Prostate gland (tissue), 2 donors: ENCODE measurements at regions of chr16 and their contacts with region 1.

Region 1: GRCh38 chr16:18801197-18801972 is at the start of gene ARL6IP1:
- DNase-seq: peak; percentile 99
- H3K4me3 ChIP-seq: peak within 1 kb of the TSS; percentile 81 to 82
- H3K27ac ChIP-seq: peak within 1 kb of the TSS; percentile 86 to 89
- H3K4me1 ChIP-seq: peaks cover 5% of the 10 kb centered on the region
- H3K27me3 ChIP-seq: no peaks in the 10 kb centered on the region
- CTCF ChIP-seq: peak; percentile 67 to 99 (median 98)
- POLR2A ChIP-seq: peak; percentile 99
- total RNA-seq, gene ARL6IP1: 226 to 298 TPM

Region 2: DNA sequence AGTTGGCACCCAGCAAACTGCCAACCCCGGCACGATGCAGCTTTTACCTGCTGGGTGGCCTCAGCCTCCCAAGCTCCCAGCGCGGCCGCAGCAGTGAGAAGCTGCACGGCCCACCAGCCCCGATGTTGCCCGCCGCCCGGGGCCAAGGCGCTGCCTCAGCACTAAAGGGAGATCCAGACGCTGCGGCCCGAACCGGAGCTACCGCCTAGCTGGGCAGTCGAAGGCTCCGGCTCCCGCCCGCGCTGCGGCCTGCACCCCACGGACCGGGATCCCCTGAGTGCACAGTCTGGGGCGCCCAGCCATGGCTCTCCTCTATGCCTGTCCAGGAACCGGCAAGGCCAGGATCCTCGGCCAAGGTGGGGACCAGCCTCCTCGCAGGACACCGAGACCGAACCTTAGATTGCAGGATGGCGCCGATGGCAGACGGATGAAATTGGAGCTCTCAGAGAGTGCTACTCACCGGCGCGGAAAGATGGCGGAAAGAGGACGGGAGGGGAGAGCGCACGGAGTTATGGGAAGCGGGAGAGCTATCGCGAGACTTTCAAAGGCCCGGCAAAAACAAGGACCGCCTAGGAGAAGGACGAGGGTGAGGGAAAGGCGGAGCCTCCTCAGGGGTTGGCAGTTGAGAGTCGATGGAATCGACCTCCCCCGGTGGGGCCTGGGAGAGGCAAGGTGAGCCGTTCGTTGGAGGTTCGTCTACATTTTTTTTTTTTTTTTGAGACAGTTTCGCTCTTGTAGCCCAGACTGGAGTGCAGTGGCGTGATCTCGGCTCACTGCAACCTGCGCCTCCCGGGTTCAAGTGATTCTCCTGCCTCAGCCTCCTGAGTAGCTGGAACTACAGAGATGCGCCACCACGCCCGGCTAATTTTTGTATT is 11.3 kb before region 1 on chr16 and contains the start of gene RPS15A:
- intact Hi-C with region 1: loop called (anchors 1 kb)
- DNase-seq: peak; percentile 94
- H3K4me3 ChIP-seq: peak within 1 kb of the TSS; percentile 81 to 87
- H3K27ac ChIP-seq: peak within 1 kb of the TSS; percentile 75 to 76
- H3K4me1 ChIP-seq: peaks cover 11% of the 10 kb centered on the region
- H3K27me3 ChIP-seq: no peaks in the 10 kb centered on the region
- CTCF ChIP-seq: peak in 2 of 4 experiments; percentile 7 to 14
- POLR2A ChIP-seq: peak; percentile 69
- total RNA-seq, gene RPS15A: 836 to 2,411 TPM

Region 3: DNA sequence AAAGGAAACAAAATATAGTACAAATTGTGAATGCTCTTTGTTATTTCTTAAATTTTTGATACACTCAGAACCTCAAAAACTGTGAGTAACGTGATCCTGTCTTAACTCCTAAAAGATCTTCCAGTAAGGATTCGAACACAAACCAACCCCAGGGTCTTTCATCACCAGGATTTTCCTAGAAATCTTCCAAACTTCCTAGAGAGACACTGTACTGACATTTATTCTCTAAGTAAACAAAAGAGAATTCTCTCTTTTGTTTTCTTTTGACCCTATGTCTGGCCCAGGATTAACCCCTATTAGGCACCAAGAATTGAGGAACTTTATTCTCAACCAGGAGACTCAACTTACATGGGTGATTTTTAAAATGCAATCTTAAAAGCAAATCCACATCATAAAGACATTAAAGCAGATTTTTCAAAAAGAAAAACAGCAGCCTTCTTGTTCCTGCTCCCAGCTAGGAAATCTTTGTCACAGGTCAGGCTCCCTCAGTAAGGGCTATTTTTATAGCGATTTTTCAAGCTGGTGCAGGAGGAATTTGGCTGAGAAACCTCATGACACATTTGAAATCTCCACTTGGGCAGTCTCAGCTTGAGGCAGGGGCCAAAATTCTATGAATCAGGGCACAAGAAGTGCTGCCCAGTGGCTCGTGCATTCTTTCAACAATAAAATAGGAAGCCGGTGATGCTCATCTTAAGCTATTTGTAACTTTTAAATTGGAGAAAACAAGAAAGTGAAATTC is 131.0 kb after region 1 on chr16:
- intact Hi-C with region 1: loop called (anchors 2 kb)
- DNase-seq: no peak
- H3K4me3 ChIP-seq: no peak overlapping the region
- H3K27ac ChIP-seq: no peak overlapping the region
- H3K4me1 ChIP-seq: no peaks in the 10 kb centered on the region
- H3K27me3 ChIP-seq: no peaks in the 10 kb centered on the region
- CTCF ChIP-seq: no peak
- POLR2A ChIP-seq: no peak

Region 4: GRCh38 chr16:18969050-18969854 is 167.9 kb after region 1 on chr16:
- intact Hi-C with region 1: loop called (anchors 2 kb)
- DNase-seq: peak; percentile 80
- H3K4me3 ChIP-seq: no peak overlapping the region
- H3K27ac ChIP-seq: no peak overlapping the region
- H3K4me1 ChIP-seq: no peaks in the 10 kb centered on the region
- H3K27me3 ChIP-seq: no peaks in the 10 kb centered on the region
- CTCF ChIP-seq: peak; percentile 89 to 91 (median 90)
- POLR2A ChIP-seq: no peak

Region 5: DNA sequence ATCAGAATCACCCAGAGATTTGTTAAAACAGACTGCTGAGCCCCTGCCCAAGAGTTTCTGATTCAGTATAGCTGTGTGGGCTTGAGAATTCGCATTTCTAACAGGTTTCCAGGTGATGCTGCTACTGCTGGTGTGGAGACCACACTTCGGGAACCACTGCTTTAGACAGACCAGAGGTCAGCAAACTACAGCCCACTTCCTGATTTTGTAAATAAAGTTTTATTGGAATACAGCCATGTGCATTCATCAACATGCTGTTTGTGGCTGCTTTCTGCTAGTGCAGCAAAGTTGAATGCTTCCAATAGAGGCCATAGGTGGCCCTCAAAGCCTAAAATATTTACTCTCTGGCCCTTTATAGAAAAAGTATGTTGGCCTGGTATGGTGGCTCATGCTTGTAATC is 451.5 kb after region 1 on chr16:
- intact Hi-C with region 1: no loop called
- DNase-seq: no peak
- H3K4me3 ChIP-seq: no peak overlapping the region
- H3K27ac ChIP-seq: no peak overlapping the region
- H3K4me1 ChIP-seq: no peaks in the 10 kb centered on the region
- H3K27me3 ChIP-seq: no peaks in the 10 kb centered on the region
- CTCF ChIP-seq: no peak
- POLR2A ChIP-seq: no peak